Colonic mucosa (tissue), 4 donors: ENCODE measurements at regions of chr1 and their contacts with region 1.

Region 1: GRCh38 chr1:26582836-26583460 is 53.4 kb downstream of the RPS6KA1 start:
- DNase-seq: no peak
- H3K4me3 ChIP-seq: no peak overlapping the region
- H3K27ac ChIP-seq: no peak overlapping the region
- H3K4me1 ChIP-seq: no peaks in the 10 kb centered on the region
- H3K27me3 ChIP-seq: no peaks in the 10 kb centered on the region
- CTCF ChIP-seq: no peak

Region 2: GRCh38 chr1:26239936-26240335 is 343.0 kb before region 1 on chr1:
- intact Hi-C with region 1: no loop called
- DNase-seq: no peak
- H3K4me3 ChIP-seq: no peak overlapping the region
- H3K27ac ChIP-seq: no peak overlapping the region
- H3K4me1 ChIP-seq: peaks cover 11% of the 10 kb centered on the region
- H3K27me3 ChIP-seq: no peaks in the 10 kb centered on the region
- CTCF ChIP-seq: no peak

Region 3: GRCh38 chr1:26496861-26497260 is 86.1 kb before region 1 on chr1:
- intact Hi-C with region 1: loop called (anchors 10 kb)
- DNase-seq: no peak
- H3K4me3 ChIP-seq: no peak overlapping the region
- H3K27ac ChIP-seq: no peak overlapping the region
- H3K4me1 ChIP-seq: no peaks in the 10 kb centered on the region
- H3K27me3 ChIP-seq: no peaks in the 10 kb centered on the region
- CTCF ChIP-seq: no peak